ENCODE measurements at regions of chr3 and their contacts with region 1.

Region 1: DNA sequence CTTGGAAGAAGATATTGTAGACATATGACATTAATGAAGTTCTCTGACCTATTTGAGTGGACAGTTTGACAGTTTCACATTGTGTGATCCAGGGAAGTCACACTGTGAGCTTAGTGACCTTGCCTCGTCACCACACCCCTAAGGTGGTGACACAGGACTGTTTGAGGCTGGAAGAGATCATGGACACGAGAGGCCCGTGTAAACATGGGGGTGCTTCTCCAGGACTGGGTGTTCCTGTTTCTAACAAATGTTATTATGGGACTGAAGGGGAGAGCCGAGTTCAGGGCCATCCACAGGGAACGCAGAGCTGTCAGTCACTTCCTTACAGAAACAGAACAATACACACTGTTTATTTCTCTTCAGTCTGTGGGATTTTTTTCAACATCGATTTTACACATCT is 96.5 kb upstream of the DNAJC19 start:
- DNase-seq: no peak
- H3K4me3 ChIP-seq: no peak overlapping the region
- H3K27ac ChIP-seq: no peak overlapping the region
- H3K4me1 ChIP-seq: no peaks in the 10 kb centered on the region; the same call in 1 of the 2 replicates
- H3K27me3 ChIP-seq: no peaks in the 10 kb centered on the region
- CTCF ChIP-seq: no peak

Region 2: GRCh38 chr3:179898024-179898423 is 1188.0 kb before region 1 on chr3:
- CTCF ChIA-PET with region 1: no interaction called
- POLR2A ChIA-PET with region 1: interaction called, 16 read pairs
- intact Hi-C with region 1: no loop called
- DNase-seq: peak; percentile 19 to 71
- H3K4me3 ChIP-seq: no peak overlapping the region
- H3K27ac ChIP-seq: no peak overlapping the region
- H3K4me1 ChIP-seq: no peaks in the 10 kb centered on the region
- H3K27me3 ChIP-seq: no peaks in the 10 kb centered on the region
- CTCF ChIP-seq: no peak

Region 3: DNA sequence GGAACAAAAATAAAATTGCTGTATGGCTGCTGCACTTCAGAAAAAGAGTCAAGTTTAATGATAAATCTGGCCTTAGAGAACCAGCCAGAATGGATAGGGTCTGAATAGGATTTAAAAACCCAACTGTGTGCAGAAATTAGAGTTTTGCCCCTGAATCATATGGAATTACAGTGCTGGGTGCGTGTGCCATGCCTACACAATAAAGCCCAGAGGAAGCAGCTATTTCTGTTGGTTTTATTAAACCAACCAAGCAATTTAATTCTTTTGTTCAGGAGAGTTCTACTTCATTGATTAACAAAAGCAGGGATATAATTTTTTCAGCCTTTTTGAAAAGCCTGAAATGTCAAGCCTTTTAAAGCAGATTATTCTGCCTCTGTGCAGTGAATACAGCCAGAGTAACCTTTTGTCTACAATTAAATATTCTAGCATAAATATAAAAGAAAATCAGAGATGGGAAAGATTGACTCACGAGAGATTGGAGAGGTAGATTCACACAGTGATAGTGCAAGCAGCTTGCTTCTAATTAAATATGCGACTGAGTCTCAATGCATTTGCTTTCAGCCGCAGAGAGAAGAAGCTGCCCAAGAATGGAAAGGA is 29.8 kb before region 1 on chr3:
- CTCF ChIA-PET with region 1: no interaction called
- POLR2A ChIA-PET with region 1: no interaction called
- intact Hi-C with region 1: loop called (anchors 1 kb)
- DNase-seq: no peak
- H3K4me3 ChIP-seq: no peak overlapping the region
- H3K27ac ChIP-seq: no peak overlapping the region
- H3K4me1 ChIP-seq: no peaks in the 10 kb centered on the region
- H3K27me3 ChIP-seq: no peaks in the 10 kb centered on the region
- CTCF ChIP-seq: no peak

Measured in PC-9 (cell line).